Activated T-helper 1 cell treated with anti-CD3 and anti-CD28 coated beads, Interleukin-12 subunit alpha, Interleukin-12 subunit beta, Interleukin-2, Interleukin-4 antibody, amounts not matched to agents 30 ng/mL and 10 ng/mL and 1 ng/mL, durations not matched to agents 14 hours and 24 hours and 36 hours (primary cell): ENCODE measurements at regions of chr10 and their contacts with region 1.

Region 1: GRCh38 chr10:31353574-31353973 is 34.6 kb downstream of the ZEB1 start:
- DNase-seq: no peak
- H3K4me3 Mint-ChIP-seq: no peak overlapping the region
- H3K27ac Mint-ChIP-seq: peak overlapping the region; percentile 85
- H3K4me1 Mint-ChIP-seq: peaks cover 37% of the 10 kb centered on the region
- H3K27me3 Mint-ChIP-seq: no peaks in the 10 kb centered on the region

Region 2: DNA sequence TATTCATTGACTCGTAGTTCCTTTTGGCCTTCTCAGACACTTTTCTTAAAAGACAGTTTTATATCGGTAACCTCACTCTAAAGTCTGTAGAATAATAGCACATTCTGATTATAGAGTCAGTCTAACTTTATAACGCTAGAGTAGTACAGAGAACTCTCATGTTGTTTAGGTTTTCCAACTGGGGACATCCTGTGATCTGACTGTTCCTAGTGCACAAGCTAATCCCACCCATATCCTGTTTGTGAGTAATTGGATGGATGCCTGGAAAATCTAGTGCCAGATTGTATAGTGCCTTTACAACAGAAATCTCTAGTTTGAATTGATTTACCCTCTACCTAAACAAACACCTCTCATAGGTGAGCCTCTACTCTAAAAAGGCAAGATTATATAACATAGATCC is 72.8 kb after region 1 on chr10:
- intact Hi-C with region 1: loop called (anchors 1 kb)
- DNase-seq: no peak
- H3K4me3 Mint-ChIP-seq: no peak overlapping the region
- H3K27ac Mint-ChIP-seq: no peak overlapping the region
- H3K4me1 Mint-ChIP-seq: peaks cover 25% of the 10 kb centered on the region
- H3K27me3 Mint-ChIP-seq: no peaks in the 10 kb centered on the region